ENCODE measurements at regions of chr1 and their contacts with region 1.

Region 1: DNA sequence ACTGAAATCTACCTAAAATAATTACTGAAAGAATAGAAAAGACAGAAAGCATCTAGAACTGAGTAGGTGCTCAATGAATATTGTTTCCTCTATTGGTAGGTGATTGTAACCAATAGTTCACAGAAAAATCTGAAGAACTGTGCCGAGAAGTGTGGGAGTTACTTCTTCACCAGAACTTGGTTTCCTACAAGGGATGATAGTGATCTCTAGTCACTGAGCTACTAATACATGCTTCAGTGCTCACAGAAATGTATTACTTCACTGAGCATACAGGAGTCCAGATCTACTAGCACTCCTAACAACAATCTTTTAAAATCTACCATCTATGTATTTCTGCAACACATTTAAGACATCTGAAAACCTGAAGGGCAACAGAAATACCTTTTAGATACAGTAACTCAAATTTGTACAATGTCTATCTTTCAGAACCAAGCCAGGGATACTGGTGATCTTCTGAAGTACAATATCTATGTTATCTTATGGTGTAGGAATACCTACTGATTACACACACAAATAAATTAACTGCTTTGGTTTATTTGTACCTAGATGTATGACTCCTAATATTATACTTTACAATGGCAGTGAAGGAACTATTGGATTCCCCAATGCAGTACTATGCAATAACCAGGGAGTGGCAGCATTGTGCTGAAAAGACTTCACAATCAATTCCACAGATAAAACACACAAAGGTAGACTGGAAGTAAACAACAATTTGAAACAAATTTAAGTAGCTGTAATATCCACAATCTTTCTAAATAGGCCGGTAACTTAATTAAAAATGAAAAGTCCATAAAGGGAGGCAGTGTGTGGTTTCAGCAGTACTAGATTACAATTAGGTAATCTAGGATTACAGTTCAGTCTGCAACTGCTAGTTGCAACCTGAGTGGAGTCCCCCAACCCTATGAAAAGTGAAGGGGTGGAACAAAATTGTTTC is 243.0 kb downstream of the SLC45A1 start:
- DNase-seq: peak in 1 of 5 donors; percentile 36
- H3K4me3 ChIP-seq: no peak overlapping the region
- H3K27ac ChIP-seq: no peak overlapping the region
- H3K4me1 ChIP-seq: peaks cover 17% of the 10 kb centered on the region
- H3K27me3 ChIP-seq: no peaks in the 10 kb centered on the region
- CTCF ChIP-seq: peak; percentile 53 to 95 (median 94)
- EP300 ChIP-seq: no peak
- POLR2A ChIP-seq: no peak

Region 2: DNA sequence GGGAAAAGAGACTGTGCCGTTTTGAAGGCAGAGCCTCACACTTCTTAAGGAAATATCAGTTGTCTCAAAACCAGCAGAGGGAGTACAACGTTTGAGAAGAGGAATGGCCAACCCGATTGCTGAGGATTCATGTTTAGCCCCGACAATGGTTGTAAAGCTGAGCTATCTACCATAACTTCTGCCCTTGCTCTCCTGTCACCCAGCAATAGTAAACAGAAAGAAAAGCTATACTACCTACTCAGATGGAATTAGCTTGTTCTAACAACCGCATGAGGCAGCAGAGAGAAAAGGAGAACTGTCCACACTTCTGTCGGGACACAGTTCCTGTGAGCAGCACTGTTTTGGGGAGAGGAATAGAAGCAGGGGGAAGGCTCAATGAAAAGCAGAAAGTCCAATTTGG is 151.8 kb before region 1 on chr1:
- intact Hi-C with region 1: loop called in 1 of 4 experiments (anchors 10 kb)
- DNase-seq: no peak
- H3K4me3 ChIP-seq: peak overlapping the region; percentile 19
- H3K27ac ChIP-seq: peak overlapping the region in 1 of 2 donors; percentile 45
- H3K4me1 ChIP-seq: peaks cover 41% of the 10 kb centered on the region
- H3K27me3 ChIP-seq: no peaks in the 10 kb centered on the region
- CTCF ChIP-seq: peak in 2 of 3 donors; percentile 31 to 62
- EP300 ChIP-seq: no peak
- POLR2A ChIP-seq: no peak

Region 3: DNA sequence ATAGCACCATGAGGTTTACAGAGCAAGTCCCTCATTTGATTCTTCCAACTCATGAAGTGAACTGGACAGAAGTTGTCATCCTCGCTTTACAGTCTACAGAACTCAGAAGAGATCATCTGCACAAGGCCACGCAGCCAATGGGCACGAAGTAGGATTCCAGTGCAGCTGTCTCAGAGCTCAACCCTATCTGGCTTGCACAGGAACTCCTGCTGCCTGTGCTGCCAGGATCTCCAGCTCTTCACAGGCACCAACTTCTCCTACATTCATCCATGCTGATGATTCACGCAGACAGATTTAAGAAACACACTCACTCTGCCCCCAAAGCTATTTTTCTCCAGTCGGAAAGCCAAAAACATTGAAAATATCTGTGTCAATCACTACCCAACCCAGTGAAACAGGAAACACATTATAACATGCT is 99.5 kb after region 1 on chr1:
- intact Hi-C with region 1: loop called in 2 of 4 experiments (anchors 10 kb)
- DNase-seq: peak in 4 of 5 donors; percentile 34 to 46 (median 36)
- H3K4me3 ChIP-seq: no peak overlapping the region
- H3K27ac ChIP-seq: peak overlapping the region in 1 of 2 donors; percentile 51
- H3K4me1 ChIP-seq: peaks cover 32% of the 10 kb centered on the region
- H3K27me3 ChIP-seq: no peaks in the 10 kb centered on the region
- CTCF ChIP-seq: no peak
- EP300 ChIP-seq: no peak
- POLR2A ChIP-seq: no peak

Region 4: GRCh38 chr1:8671306-8671917 is 110.5 kb after region 1 on chr1:
- intact Hi-C with region 1: loop called (anchors 5 to 10 kb)
- DNase-seq: peak in 2 of 5 donors; percentile 21 to 60
- H3K4me3 ChIP-seq: no peak overlapping the region
- H3K27ac ChIP-seq: no peak overlapping the region
- H3K4me1 ChIP-seq: peaks cover 4% of the 10 kb centered on the region
- H3K27me3 ChIP-seq: no peaks in the 10 kb centered on the region
- CTCF ChIP-seq: peak; percentile 65 to 86 (median 85)
- EP300 ChIP-seq: no peak
- POLR2A ChIP-seq: no peak

Region 5: GRCh38 chr1:8727809-8728213 is 166.9 kb after region 1 on chr1:
- intact Hi-C with region 1: loop called in 3 of 4 experiments (anchors 5 to 10 kb)
- DNase-seq: no peak
- H3K4me3 ChIP-seq: no peak overlapping the region
- H3K27ac ChIP-seq: no peak overlapping the region
- H3K4me1 ChIP-seq: peaks cover 1% of the 10 kb centered on the region
- H3K27me3 ChIP-seq: no peaks in the 10 kb centered on the region
- CTCF ChIP-seq: no peak
- EP300 ChIP-seq: no peak
- POLR2A ChIP-seq: no peak

Measured in ovary (tissue), 10 donors.